Endothelial cell of umbilical vein (primary cell): ENCODE measurements at regions of chr20 and their contacts with region 1.

Region 1: GRCh38 chr20:35269055-35269781 is 8.7 kb downstream of the MMP24OS start:
- DNase-seq: peak; percentile 66
- H3K4me3 ChIP-seq: no peak overlapping the region
- H3K27ac ChIP-seq: no peak overlapping the region
- H3K4me1 ChIP-seq: no peaks in the 10 kb centered on the region
- H3K27me3 ChIP-seq: no peaks in the 10 kb centered on the region
- CTCF ChIP-seq: peak; percentile 87 to 95
- POLR2A ChIP-seq: no peak

Region 2: GRCh38 chr20:34825530-34826362 is 443.5 kb before region 1 on chr20 and contains the start of gene NCOA6:
- CTCF ChIA-PET with region 1: no interaction called
- POLR2A ChIA-PET with region 1: no interaction called
- dilution Hi-C with region 1: loop called (anchors 25 kb)
- intact Hi-C with region 1: no loop called
- DNase-seq: peak; percentile 59
- H3K4me3 ChIP-seq: peak within 1 kb of the TSS; percentile 66 to 81 (median 75)
- H3K27ac ChIP-seq: peak within 1 kb of the TSS; percentile 62
- H3K4me1 ChIP-seq: peaks cover 12% of the 10 kb centered on the region
- H3K27me3 ChIP-seq: peaks cover 0 to 6% of the 10 kb centered on the region in 2 experiments
- CTCF ChIP-seq: no peak
- POLR2A ChIP-seq: peak; percentile 35
- total RNA-seq, gene NCOA6: 25.5 and 26.7 TPM in 2 replicates

Region 3: DNA sequence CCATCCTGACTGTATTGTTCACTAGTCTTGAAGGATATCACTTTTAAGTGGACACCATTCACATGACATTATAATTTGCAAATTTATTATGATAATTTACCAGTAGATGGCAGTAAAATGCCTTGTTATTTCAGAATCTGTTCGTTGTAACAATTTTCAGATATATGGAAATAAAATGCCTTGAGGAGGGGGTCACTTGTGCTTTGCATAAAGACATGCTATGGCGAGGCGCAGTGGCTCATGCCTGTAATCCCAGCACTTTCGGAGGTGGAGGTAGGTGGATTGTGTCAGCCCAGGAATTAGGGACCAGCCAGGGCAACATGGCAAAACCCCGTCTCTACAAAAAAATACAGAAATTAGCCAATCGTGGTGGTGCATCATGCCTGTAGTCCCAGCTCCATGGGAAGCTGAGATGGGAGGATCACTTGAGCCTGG is 434.7 kb before region 1 on chr20:
- CTCF ChIA-PET with region 1: interaction called, 7 read pairs
- POLR2A ChIA-PET with region 1: no interaction called
- dilution Hi-C with region 1: loop called (anchors 25 kb)
- intact Hi-C with region 1: loop called (anchors 1 kb)
- DNase-seq: peak; percentile 50
- H3K4me3 ChIP-seq: no peak overlapping the region
- H3K27ac ChIP-seq: no peak overlapping the region
- H3K4me1 ChIP-seq: peaks cover 2% of the 10 kb centered on the region
- H3K27me3 ChIP-seq: peaks cover 16 to 25% of the 10 kb centered on the region in 2 experiments
- CTCF ChIP-seq: peak in 1 of 2 donors; percentile 18
- POLR2A ChIP-seq: no peak

Region 4: DNA sequence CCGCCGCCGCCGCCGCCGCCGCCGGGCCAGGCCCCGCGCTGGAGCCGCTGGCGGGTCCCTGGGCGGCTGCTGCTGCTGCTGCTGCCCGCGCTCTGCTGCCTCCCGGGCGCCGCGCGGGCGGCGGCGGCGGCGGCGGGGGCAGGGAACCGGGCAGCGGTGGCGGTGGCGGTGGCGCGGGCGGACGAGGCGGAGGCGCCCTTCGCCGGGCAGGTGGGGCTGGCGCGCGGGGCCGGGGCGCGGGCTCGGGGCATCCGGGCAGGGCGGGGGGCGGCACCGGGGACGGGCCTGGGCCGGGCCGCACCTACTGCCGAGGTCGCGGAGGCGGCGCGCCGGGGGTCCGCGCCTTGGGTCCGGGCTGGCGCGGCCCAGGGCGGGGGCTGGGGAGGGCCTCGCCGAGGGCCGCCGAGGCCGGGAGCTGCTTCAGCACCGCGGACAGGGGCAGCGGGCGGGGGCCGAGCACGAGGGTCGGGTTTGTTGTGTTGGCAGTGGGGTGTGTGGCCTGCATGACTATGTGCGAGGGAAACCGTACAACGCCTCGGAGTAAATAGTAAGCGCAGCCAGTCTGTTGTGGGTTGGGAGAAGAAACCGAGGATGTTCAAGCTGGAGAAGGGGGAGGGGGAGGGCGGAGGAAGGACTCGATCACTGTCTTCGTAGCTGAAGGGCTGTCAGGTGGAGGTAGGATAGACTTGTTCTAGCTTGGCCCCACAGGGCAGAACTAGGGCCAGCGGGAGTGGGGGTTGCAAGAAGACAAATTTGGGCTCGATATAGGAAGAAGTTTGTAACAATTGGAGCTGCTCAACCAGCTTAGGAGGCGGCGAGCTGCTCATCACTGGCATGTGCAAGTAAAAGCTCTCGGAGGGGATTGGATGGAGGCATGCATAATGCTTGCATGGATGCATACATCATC is 42.2 kb before region 1 on chr20:
- CTCF ChIA-PET with region 1: interaction called, 5 read pairs
- POLR2A ChIA-PET with region 1: interaction called, 3 read pairs
- dilution Hi-C with region 1: no loop called
- intact Hi-C with region 1: loop called (anchors 2 kb)
- DNase-seq: peak; percentile 35
- H3K4me3 ChIP-seq: no peak overlapping the region
- H3K27ac ChIP-seq: no peak overlapping the region
- H3K4me1 ChIP-seq: peaks cover 19% of the 10 kb centered on the region
- H3K27me3 ChIP-seq: peaks cover 8 to 14% of the 10 kb centered on the region in 2 experiments
- CTCF ChIP-seq: no peak
- POLR2A ChIP-seq: no peak

Region 5: GRCh38 chr20:35395728-35396127 is 126.5 kb after region 1 on chr20:
- CTCF ChIA-PET with region 1: no interaction called
- POLR2A ChIA-PET with region 1: interaction called, 17 read pairs
- dilution Hi-C with region 1: no loop called
- intact Hi-C with region 1: no loop called
- DNase-seq: peak; percentile 48
- H3K4me3 ChIP-seq: no peak overlapping the region
- H3K27ac ChIP-seq: no peak overlapping the region
- H3K4me1 ChIP-seq: peaks cover 31% of the 10 kb centered on the region
- H3K27me3 ChIP-seq: no peaks in the 10 kb centered on the region
- CTCF ChIP-seq: no peak
- POLR2A ChIP-seq: no peak